Transverse colon (tissue), 4 donors: ENCODE measurements at regions of chrX and their contacts with region 1.

Region 1: DNA sequence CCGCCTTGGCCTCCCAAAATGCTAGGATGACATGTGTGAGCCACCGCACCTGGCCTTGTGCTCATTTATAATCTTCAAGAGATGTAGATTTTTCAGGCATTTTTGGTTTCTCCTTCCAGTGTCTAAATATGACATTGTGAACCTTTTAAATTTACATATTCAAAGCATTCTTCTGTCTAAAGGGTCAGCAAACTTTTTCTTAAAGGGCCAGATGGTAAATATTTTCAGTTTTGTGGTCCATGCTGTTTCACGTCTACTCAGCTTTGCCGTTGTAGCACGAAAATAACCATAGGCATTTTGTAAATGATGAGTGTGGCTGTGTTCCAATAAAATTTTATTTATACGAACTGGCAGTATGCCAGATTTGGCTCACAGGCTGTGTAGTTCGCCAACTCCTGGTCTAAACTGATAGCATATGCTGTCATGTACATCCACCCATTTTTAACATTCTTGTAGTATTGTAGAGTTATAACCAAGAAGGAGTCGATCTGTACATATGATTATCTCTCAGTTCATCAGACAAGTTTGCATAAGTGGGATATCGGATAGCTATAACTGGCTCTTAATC is 12.7 kb upstream of the GCNA start:
- DNase-seq: no peak
- H3K4me3 ChIP-seq: no peak overlapping the region
- H3K27ac ChIP-seq: no peak overlapping the region
- H3K4me1 ChIP-seq: no peaks in the 10 kb centered on the region
- H3K27me3 ChIP-seq: no peaks in the 10 kb centered on the region
- CTCF ChIP-seq: no peak
- EP300 ChIP-seq: no peak
- POLR2A ChIP-seq: no peak

Region 2: GRCh38 chrX:71254092-71254941 is 311.2 kb before region 1 on chrX and contains the start of gene ZMYM3:
- in situ Hi-C with region 1: no loop called
- intact Hi-C with region 1: no loop called
- DNase-seq: peak; percentile 88
- H3K4me3 ChIP-seq: peak within 1 kb of the TSS; percentile 40 to 83 (median 64)
- H3K27ac ChIP-seq: peak within 1 kb of the TSS; percentile 82 to 92 (median 90)
- H3K4me1 ChIP-seq: peaks cover 5 to 18% (median 6%) of the 10 kb centered on the region in 4 donors
- H3K27me3 ChIP-seq: no peaks in the 10 kb centered on the region
- CTCF ChIP-seq: no peak
- EP300 ChIP-seq: no peak
- POLR2A ChIP-seq: peak; percentile 41
- total RNA-seq, gene ZMYM3: 5.2 to 26.9 (median 13.4) TPM

Region 3: GRCh38 chrX:71378732-71379131 is 186.8 kb before region 1 on chrX:
- in situ Hi-C with region 1: loop called in 1 of 4 experiments (anchors 25 kb)
- intact Hi-C with region 1: no loop called
- DNase-seq: no peak
- H3K4me3 ChIP-seq: no peak overlapping the region
- H3K27ac ChIP-seq: no peak overlapping the region
- H3K4me1 ChIP-seq: no peaks in the 10 kb centered on the region
- H3K27me3 ChIP-seq: no peaks in the 10 kb centered on the region
- CTCF ChIP-seq: no peak
- EP300 ChIP-seq: no peak
- POLR2A ChIP-seq: no peak